ENCODE measurements at regions of chr6 and their contacts with region 1.

Region 1: GRCh38 chr6:63352587-63353285 is 33.0 kb upstream of the LGSN start:
- DNase-seq: peak; percentile 64
- H3K4me3 Mint-ChIP-seq: peak overlapping the region; percentile 47
- H3K27ac Mint-ChIP-seq: peak overlapping the region; percentile 26
- H3K4me1 Mint-ChIP-seq: peaks cover 12% of the 10 kb centered on the region
- H3K27me3 Mint-ChIP-seq: peaks cover 3% of the 10 kb centered on the region

Region 2: DNA sequence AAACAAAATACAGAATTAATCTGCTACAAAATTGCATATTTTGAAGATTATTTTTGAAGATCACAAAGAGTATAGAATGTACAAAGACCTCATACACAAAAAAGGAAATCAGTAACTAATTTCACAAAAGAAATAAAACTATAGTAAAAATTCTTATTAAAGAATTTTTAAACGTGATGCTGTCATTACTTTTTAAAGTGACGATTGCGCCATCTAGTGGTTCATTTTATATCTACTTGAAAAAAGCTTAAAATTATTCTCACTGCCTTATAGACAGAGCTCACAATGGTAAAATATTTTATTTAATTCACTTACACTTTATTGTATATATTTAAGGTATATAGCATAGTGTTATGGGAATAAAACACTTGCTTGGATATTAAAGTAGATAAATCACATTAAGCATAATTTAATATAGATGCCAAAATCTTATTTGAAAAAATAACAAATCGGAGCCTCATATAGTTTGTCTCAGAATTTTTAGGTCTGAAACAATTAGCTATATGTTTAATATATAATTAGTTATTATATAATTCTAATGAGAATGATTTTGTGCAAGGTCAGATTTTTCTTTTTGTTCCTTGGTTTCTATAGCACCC is 411.7 kb after region 1 on chr6:
- intact Hi-C with region 1: loop called (anchors 1 kb)
- DNase-seq: peak; percentile 63
- H3K4me3 Mint-ChIP-seq: no peak overlapping the region
- H3K27ac Mint-ChIP-seq: no peak overlapping the region
- H3K4me1 Mint-ChIP-seq: no peaks in the 10 kb centered on the region
- H3K27me3 Mint-ChIP-seq: peaks cover 14% of the 10 kb centered on the region